Motor neuron (in vitro differentiated cells): ENCODE measurements at regions of chrX and their contacts with region 1.

Region 1: DNA sequence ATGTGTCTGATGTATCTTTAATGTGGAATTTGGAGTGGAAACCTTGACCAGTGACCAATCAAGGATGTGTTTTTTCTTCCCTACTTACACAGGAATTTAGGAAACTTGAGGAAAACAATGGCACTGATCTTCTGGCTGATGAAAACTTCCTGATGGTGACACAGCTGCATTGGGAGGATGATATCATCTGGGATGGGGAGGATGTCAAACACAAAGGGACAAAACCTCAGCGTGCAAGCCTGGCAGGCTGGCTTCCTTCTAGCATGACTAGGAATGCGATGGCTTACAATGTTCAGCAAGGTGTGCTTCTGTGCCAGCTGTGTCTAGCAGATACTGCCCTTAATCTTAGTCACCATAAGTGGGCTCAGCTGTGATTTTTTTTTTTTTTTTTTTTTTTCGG is 12.6 kb downstream of the TAF1 start:
- ATAC-seq: peak in 2 of 8 experiments; percentile 40 to 59
- H3K4me3 ChIP-seq: no peak overlapping the region
- H3K27ac ChIP-seq: no peak overlapping the region
- H3K4me1 ChIP-seq: no peaks in the 10 kb centered on the region

Region 2: DNA sequence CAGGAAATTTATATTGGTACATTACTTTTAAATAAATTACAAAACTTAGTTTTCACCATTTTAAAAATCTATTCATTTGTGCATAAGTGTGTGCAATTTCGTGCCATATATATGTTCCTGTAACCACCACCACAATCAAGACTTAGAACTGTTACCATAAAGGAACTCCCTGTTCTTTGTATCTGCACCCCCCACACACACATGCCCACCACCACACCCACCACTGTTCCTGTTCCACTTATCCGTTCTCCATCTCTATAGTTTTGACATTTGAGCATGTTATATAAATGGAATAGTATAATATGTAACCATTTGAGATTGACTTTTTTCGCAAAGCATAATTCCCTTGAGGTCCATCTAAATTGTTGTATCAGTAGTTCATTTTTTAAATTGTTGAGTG is 61.2 kb after region 1 on chrX:
- in situ Hi-C with region 1: no loop called
- ATAC-seq: no peak
- H3K4me3 ChIP-seq: no peak overlapping the region
- H3K27ac ChIP-seq: no peak overlapping the region
- H3K4me1 ChIP-seq: no peaks in the 10 kb centered on the region

Region 3: DNA sequence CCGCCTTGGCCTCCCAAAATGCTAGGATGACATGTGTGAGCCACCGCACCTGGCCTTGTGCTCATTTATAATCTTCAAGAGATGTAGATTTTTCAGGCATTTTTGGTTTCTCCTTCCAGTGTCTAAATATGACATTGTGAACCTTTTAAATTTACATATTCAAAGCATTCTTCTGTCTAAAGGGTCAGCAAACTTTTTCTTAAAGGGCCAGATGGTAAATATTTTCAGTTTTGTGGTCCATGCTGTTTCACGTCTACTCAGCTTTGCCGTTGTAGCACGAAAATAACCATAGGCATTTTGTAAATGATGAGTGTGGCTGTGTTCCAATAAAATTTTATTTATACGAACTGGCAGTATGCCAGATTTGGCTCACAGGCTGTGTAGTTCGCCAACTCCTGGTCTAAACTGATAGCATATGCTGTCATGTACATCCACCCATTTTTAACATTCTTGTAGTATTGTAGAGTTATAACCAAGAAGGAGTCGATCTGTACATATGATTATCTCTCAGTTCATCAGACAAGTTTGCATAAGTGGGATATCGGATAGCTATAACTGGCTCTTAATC is 186.8 kb after region 1 on chrX:
- in situ Hi-C with region 1: loop called in 3 of 9 experiments (anchors 25 kb)
- ATAC-seq: peak in 3 of 8 experiments; percentile 43 to 92 (median 66)
- H3K4me3 ChIP-seq: no peak overlapping the region
- H3K27ac ChIP-seq: no peak overlapping the region
- H3K4me1 ChIP-seq: no peaks in the 10 kb centered on the region